ENCODE measurements at regions of chr14 and their contacts with region 1.

Region 1: GRCh38 chr14:52473557-52473956 is 78.7 kb downstream of the TXNDC16 start:
- DNase-seq: peak in 1 of 2 donors; percentile 75
- ATAC-seq: peak in 2 of 3 donors; percentile 46 to 57
- H3K4me3 ChIP-seq: no peak overlapping the region
- H3K4me3 Mint-ChIP-seq: no peak overlapping the region
- H3K27ac ChIP-seq: no peak overlapping the region
- H3K27ac Mint-ChIP-seq: no peak overlapping the region
- H3K4me1 ChIP-seq: no peaks in the 10 kb centered on the region
- H3K4me1 Mint-ChIP-seq: peaks cover 0 to 6% of the 10 kb centered on the region in 2 donors
- H3K27me3 ChIP-seq: no peaks in the 10 kb centered on the region
- H3K27me3 Mint-ChIP-seq: no peaks in the 10 kb centered on the region
- CTCF ChIP-seq: peak; percentile 63

Region 2: DNA sequence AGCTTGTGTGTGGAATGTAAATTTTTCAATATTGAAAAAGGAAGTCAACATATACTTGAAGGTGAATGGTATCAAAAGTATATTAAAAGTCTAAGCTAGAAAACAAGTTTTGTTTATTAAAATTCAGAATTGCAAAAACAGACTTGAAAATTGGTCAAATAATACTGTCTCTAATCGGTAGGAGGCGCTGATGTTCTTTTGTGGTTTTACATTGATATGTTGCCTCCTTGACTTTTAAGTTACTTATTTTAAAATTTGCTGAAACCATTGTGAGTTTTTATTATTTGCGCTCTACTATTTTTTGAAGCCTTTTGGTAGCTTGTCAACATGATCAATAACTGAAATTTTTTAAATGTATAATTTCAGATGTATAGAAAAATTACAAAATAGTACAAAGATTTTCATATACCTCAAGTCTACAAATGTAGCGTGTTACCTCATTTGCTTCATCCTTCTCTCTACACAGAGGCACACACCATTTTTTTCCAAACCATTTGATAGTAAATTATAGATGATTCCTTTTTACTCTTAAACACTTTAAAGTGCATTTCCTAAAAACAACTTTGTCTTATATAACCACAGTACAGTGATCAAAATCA is 477.3 kb before region 1 on chr14:
- intact Hi-C with region 1: loop called (anchors 1 kb)
- DNase-seq: peak in 1 of 2 donors; percentile 72
- ATAC-seq: peak in 2 of 3 donors; percentile 50 to 57
- H3K4me3 ChIP-seq: no peak overlapping the region
- H3K4me3 Mint-ChIP-seq: no peak overlapping the region
- H3K27ac ChIP-seq: no peak overlapping the region
- H3K27ac Mint-ChIP-seq: peak overlapping the region in 1 of 2 donors; percentile 68
- H3K4me1 ChIP-seq: no peaks in the 10 kb centered on the region
- H3K4me1 Mint-ChIP-seq: peaks cover 7 to 10% of the 10 kb centered on the region in 2 donors
- H3K27me3 ChIP-seq: no peaks in the 10 kb centered on the region
- H3K27me3 Mint-ChIP-seq: no peaks in the 10 kb centered on the region
- CTCF ChIP-seq: peak; percentile 86

Region 3: DNA sequence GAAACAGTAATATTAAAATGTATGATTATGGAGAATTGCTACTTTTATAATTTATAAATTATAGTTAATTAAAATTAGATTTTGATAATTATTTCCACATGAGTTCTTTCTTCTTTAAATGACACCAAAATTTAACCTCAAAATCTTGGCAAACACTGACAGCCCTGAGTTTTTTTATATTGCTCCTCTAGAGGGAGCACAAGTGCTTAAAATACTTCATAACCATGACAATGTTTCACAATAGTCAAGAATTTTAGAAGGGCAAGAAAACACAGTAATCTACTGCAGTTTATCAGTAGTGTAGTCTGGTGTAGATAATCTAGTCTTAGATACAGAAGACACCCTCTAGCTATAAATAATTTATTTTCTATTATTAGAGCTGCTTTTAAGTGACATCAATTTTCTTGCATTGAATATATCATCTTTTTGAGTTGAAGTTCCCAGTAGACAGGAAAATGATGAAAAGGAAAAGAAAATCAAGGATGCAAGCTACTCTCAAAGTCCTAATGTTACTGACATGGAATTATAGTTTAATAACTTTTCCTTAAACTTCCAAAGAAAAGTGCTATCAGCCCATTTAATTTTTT is 173.8 kb before region 1 on chr14:
- intact Hi-C with region 1: loop called (anchors 1 kb)
- DNase-seq: peak in 1 of 2 donors; percentile 74
- ATAC-seq: peak; percentile 81 to 82 (median 81)
- H3K4me3 ChIP-seq: no peak overlapping the region
- H3K4me3 Mint-ChIP-seq: no peak overlapping the region
- H3K27ac ChIP-seq: no peak overlapping the region
- H3K27ac Mint-ChIP-seq: peak overlapping the region in 1 of 2 donors; percentile 82
- H3K4me1 ChIP-seq: peaks cover 6% of the 10 kb centered on the region
- H3K4me1 Mint-ChIP-seq: peaks cover 49 to 59% of the 10 kb centered on the region in 2 donors
- H3K27me3 ChIP-seq: no peaks in the 10 kb centered on the region
- H3K27me3 Mint-ChIP-seq: no peaks in the 10 kb centered on the region
- CTCF ChIP-seq: peak; percentile 79

Region 4: DNA sequence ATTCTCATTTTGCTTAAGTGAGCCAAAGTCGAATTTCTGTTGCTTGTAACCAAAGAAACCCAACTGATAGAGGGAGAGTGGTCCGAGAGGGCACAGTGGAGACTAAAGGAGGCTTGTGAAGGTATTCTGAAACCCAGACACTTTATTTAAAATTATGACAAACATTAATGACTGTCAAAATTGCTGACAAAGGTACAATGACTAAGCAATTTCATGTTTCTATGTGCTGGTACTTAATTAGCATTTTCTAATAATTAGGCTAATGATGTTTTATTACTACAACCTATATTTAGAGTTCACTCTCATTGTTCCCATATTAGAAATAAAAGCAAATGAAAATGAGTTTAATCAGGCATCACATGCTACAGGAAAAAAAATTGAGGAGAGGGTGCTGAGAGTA is 43.1 kb before region 1 on chr14:
- intact Hi-C with region 1: no loop called
- DNase-seq: no peak
- ATAC-seq: no peak
- H3K4me3 ChIP-seq: no peak overlapping the region
- H3K4me3 Mint-ChIP-seq: no peak overlapping the region
- H3K27ac ChIP-seq: no peak overlapping the region
- H3K27ac Mint-ChIP-seq: no peak overlapping the region
- H3K4me1 ChIP-seq: no peaks in the 10 kb centered on the region
- H3K4me1 Mint-ChIP-seq: peaks cover 7 to 13% of the 10 kb centered on the region in 2 donors
- H3K27me3 ChIP-seq: no peaks in the 10 kb centered on the region
- H3K27me3 Mint-ChIP-seq: no peaks in the 10 kb centered on the region
- CTCF ChIP-seq: no peak

Measured in natural killer cell (primary cell).